ENCODE measurements at regions of chr7 and their contacts with region 1.

Region 1: GRCh38 chr7:151428378-151429223 is 11.3 kb downstream of the CRYGN start:
- DNase-seq: no peak
- H3K4me3 ChIP-seq: no peak overlapping the region
- H3K27ac ChIP-seq: no peak overlapping the region
- H3K4me1 ChIP-seq: peaks cover 31% of the 10 kb centered on the region
- H3K27me3 ChIP-seq: no peaks in the 10 kb centered on the region
- CTCF ChIP-seq: no peak

Region 2: GRCh38 chr7:151315038-151315655 is 113.5 kb before region 1 on chr7:
- CTCF ChIA-PET with region 1: no interaction called
- POLR2A ChIA-PET with region 1: no interaction called
- intact Hi-C with region 1: no loop called
- DNase-seq: peak; percentile 80
- H3K4me3 ChIP-seq: no peak overlapping the region
- H3K27ac ChIP-seq: no peak overlapping the region
- H3K4me1 ChIP-seq: no peaks in the 10 kb centered on the region
- H3K27me3 ChIP-seq: no peaks in the 10 kb centered on the region
- CTCF ChIP-seq: peak; percentile 82

Region 3: GRCh38 chr7:151454306-151454705 is 25.7 kb after region 1 on chr7:
- CTCF ChIA-PET with region 1: interaction called, 3 read pairs
- POLR2A ChIA-PET with region 1: interaction called, 10 read pairs
- intact Hi-C with region 1: no loop called
- DNase-seq: no peak
- H3K4me3 ChIP-seq: no peak overlapping the region
- H3K27ac ChIP-seq: no peak overlapping the region
- H3K4me1 ChIP-seq: no peaks in the 10 kb centered on the region
- H3K27me3 ChIP-seq: no peaks in the 10 kb centered on the region
- CTCF ChIP-seq: no peak